ENCODE measurements at regions of chr3 and their contacts with region 1.

Region 1: GRCh38 chr3:195863121-195864006 is 45.0 kb downstream of the TNK2 start:
- DNase-seq: peak; percentile 93
- ATAC-seq: peak; percentile 95

Region 2: GRCh38 chr3:195894780-195895607 is 31.6 kb after region 1 on chr3:
- intact Hi-C with region 1: loop called (anchors 2 kb)
- DNase-seq: no peak
- ATAC-seq: peak; percentile 29

Region 3: DNA sequence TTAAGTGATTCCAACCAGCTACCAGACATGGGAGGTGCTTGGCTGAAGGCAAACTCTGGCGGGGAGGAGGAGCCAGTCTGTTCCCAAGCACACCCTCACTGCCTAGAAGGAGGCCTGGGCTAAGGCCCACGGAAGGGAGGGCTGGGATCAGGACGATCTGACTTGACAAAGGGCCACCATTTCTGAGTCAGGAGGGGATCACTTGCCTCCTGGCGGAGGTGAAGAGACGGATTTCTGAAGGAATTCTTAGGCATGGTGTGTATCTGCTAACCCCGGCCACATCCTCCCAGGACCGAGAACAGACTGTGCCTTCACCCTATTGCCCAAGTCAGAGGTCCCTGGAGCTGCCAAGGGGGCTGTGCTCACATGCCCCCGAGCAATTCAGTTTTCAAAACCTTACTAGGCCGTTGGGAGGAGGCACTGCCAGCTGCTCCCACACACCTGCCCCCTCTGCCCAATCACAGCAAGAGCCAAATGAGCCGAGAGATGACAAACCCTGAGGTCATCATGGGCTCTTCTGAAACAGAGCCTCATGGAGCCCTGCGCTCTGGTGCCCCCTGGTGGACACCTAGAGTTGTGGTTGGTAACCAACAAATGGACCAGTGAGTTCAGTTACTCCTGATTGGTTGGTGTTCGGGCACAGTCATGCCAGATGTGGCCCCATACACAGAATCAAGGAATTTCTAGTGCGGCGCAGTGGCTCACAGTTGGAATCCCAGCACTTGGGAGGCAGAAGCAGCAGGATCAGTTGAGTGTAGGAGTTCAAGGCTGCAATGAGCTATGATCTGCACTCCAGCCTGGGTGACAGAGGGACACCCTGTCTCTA is 51.5 kb after region 1 on chr3:
- intact Hi-C with region 1: loop called (anchors 5 kb)
- DNase-seq: peak; percentile 95
- ATAC-seq: peak; percentile 92

Measured in sciatic nerve (tissue), 2 donors.